ENCODE measurements at regions of chr1 and their contacts with region 1.

Region 1: GRCh38 chr1:41950820-41951219 is 32.1 kb upstream of the HIVEP3 start:
- DNase-seq: peak; percentile 58
- H3K4me3 Mint-ChIP-seq: no peak overlapping the region
- H3K27ac Mint-ChIP-seq: peak overlapping the region; percentile 55
- H3K4me1 Mint-ChIP-seq: peaks cover 36% of the 10 kb centered on the region
- H3K27me3 Mint-ChIP-seq: no peaks in the 10 kb centered on the region

Region 2: GRCh38 chr1:41919764-41920397 is 30.9 kb before region 1 on chr1:
- CTCF ChIA-PET with region 1: no interaction called
- intact Hi-C with region 1: loop called (anchors 1 kb)
- DNase-seq: peak; percentile 91
- H3K4me3 Mint-ChIP-seq: peak overlapping the region; percentile 89
- H3K27ac Mint-ChIP-seq: peak overlapping the region; percentile 91
- H3K4me1 Mint-ChIP-seq: peaks cover 49% of the 10 kb centered on the region
- H3K27me3 Mint-ChIP-seq: no peaks in the 10 kb centered on the region

Region 3: DNA sequence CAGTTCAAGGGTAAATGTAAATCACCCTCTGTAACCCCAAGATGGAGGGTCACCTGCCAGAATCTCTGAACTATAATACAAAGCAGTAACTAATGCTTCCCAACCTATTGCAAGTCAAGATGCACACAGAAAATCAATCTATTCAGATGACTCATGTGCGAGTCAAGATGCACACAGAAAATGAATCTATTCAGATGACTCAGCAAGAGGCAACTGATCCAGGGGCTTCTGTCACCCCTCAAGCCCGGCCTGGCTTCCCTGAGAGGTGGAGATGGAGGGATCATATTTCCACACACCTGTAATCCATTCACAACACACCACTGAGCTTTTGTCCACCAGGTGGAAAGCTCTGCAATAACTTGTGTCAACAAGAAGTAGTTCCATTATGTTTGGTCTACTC is 14.7 kb before region 1 on chr1:
- CTCF ChIA-PET with region 1: interaction called, 5 read pairs
- intact Hi-C with region 1: loop called (anchors 1 kb)
- DNase-seq: peak; percentile 55
- H3K4me3 Mint-ChIP-seq: no peak overlapping the region
- H3K27ac Mint-ChIP-seq: no peak overlapping the region
- H3K4me1 Mint-ChIP-seq: peaks cover 40% of the 10 kb centered on the region
- H3K27me3 Mint-ChIP-seq: no peaks in the 10 kb centered on the region

Region 4: DNA sequence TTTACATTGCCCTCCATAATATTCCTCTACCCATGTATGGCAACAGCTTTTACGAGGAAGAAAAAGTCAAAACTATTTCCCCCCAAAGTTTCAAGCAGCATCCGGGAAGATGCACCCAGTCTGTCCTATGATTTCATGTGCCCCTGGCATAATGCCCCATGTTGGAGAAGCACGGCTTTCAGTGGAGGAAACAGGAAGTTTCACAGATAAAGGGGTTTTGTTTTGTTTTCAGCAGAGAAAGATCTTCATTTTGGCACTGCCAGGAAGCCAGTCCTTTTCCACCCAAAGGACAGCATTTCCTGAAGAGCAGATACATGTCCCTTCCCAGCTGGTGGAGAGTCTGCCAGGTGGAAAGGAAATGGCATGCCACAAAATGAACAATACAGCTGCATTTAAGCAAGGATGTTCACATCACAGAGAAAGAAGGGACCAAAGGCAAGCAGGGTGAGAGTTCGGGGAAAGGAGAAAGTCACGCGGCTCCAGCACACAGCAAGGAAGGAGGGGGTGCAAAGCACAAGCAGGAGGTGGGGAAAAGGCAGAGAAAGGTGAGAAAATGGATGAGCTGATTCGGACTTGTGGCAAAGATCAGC is 63.2 kb after region 1 on chr1:
- CTCF ChIA-PET with region 1: no interaction called
- intact Hi-C with region 1: loop called (anchors 2 kb)
- DNase-seq: peak; percentile 17
- H3K4me3 Mint-ChIP-seq: peak overlapping the region; percentile 44
- H3K27ac Mint-ChIP-seq: no peak overlapping the region
- H3K4me1 Mint-ChIP-seq: peaks cover 50% of the 10 kb centered on the region
- H3K27me3 Mint-ChIP-seq: no peaks in the 10 kb centered on the region

Measured in activated naive CD4-positive, alpha-beta T cell treated with anti-CD3 and anti-CD28 coated beads for 36 hours (primary cell).